Panc1 (cell line): ENCODE measurements at regions of chr19 and their contacts with region 1.

Region 1: GRCh38 chr19:34173193-34173956 is 1.1 kb downstream of the LSM14A start:
- DNase-seq: no peak
- ATAC-seq: peak; percentile 43
- H3K4me3 ChIP-seq: peak overlapping the region; percentile 78 to 94
- H3K27ac ChIP-seq: peak overlapping the region; percentile 97
- H3K4me1 ChIP-seq: peaks cover 46% of the 10 kb centered on the region
- H3K27me3 ChIP-seq: no peaks in the 10 kb centered on the region
- CTCF ChIP-seq: no peak

Region 2: GRCh38 chr19:34082289-34083077 is 90.9 kb before region 1 on chr19:
- CTCF ChIA-PET with region 1: no interaction called
- POLR2A ChIA-PET with region 1: no interaction called
- in situ Hi-C with region 1: no loop called
- intact Hi-C with region 1: no loop called
- DNase-seq: no peak
- ATAC-seq: no peak
- H3K4me3 ChIP-seq: no peak overlapping the region
- H3K27ac ChIP-seq: no peak overlapping the region
- H3K4me1 ChIP-seq: no peaks in the 10 kb centered on the region
- H3K27me3 ChIP-seq: no peaks in the 10 kb centered on the region
- CTCF ChIP-seq: no peak

Region 3: GRCh38 chr19:34145741-34146202 is 27.6 kb before region 1 on chr19:
- CTCF ChIA-PET with region 1: no interaction called
- POLR2A ChIA-PET with region 1: no interaction called
- in situ Hi-C with region 1: no loop called
- intact Hi-C with region 1: no loop called
- DNase-seq: no peak
- ATAC-seq: peak; percentile 76
- H3K4me3 ChIP-seq: no peak overlapping the region
- H3K27ac ChIP-seq: no peak overlapping the region
- H3K4me1 ChIP-seq: no peaks in the 10 kb centered on the region
- H3K27me3 ChIP-seq: no peaks in the 10 kb centered on the region
- CTCF ChIP-seq: peak; percentile 97

Region 4: DNA sequence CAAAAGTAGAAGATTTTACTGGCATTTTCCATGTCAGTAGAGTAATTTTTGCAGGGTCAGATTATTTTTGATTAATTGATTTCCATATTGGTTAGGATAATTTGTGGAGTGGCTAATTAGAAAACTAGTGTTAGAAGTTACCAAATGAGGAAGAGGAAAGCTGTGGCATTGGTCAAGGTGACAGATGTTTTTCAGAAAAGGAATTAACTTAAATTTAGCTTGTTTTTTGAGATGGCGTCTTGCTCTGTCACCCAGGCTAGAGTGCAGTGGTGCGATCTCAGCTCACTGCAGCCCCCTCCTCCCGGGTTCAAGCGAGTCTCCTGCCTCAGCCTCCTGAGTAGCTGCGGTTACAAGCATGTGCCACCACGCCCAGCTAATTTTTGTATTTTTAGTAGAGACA is 27.8 kb after region 1 on chr19:
- CTCF ChIA-PET with region 1: no interaction called
- POLR2A ChIA-PET with region 1: interaction called, 12 read pairs
- in situ Hi-C with region 1: no loop called
- intact Hi-C with region 1: no loop called
- DNase-seq: no peak
- ATAC-seq: no peak
- H3K4me3 ChIP-seq: no peak overlapping the region
- H3K27ac ChIP-seq: no peak overlapping the region
- H3K4me1 ChIP-seq: no peaks in the 10 kb centered on the region
- H3K27me3 ChIP-seq: no peaks in the 10 kb centered on the region
- CTCF ChIP-seq: no peak